ACHN (cell line): ENCODE measurements at regions of chr12 and their contacts with region 1.

Region 1: DNA sequence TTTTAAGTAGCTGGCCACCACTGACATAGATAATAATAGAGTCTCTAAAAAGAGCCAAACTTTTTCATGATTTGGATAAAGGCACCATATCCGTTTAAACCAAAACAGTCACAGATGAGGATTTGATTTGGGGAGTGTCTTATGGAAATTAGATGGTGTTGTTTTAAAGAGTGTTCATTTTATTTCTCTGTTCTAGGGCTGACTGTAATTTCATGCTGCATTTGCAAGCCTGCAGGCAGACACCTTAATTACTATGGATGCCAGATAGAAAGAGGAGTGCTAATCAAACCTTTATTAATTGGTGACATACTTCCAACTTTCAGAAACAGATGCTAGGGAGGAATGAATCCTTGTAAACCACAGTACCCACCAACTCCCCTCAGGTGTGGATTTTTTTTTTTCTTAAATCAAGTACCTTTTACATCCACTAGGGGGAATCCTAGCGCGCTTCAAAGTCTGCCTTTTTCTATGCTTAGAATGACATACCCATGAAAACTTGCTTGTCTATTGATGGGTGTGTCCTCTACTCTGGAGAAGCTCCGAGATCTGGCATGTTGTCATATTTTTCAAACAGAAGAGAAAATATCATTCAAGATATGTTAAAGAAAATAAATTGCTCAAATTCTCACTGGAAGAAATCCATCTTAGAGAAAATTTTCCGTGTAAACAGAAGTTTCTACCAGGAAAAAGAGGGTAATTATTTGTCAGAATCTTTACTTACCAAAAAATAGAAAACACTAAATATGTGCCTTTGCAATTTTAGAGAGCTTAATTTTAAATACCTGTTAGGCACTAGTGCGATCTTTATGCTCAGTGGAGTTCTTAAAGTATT is 14.2 kb upstream of the PLXNC1 start:
- DNase-seq: peak; percentile 76

Region 2: DNA sequence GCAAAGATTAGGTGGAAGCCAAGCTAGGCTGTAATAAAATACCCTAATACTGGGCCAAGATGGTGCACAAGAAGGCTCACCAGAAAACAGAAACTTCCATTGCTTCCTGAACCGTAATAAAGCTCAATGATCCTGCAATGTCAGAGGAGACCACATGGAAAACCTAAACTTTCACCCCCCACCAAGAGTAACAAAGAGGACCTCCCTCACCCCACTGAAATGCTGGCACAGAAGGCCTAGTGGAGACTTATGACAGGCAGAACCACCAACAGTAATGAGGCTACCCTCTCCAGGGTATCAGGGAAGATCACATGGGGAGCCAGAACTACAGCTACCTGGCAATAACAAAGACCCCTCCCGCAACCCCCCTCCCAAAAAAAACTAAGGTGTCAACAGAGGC is 282.4 kb after region 1 on chr12:
- in situ Hi-C with region 1: no loop called
- DNase-seq: no peak

Region 3: GRCh38 chr12:94498073-94498472 is 363.9 kb after region 1 on chr12:
- in situ Hi-C with region 1: no loop called
- DNase-seq: no peak

Region 4: DNA sequence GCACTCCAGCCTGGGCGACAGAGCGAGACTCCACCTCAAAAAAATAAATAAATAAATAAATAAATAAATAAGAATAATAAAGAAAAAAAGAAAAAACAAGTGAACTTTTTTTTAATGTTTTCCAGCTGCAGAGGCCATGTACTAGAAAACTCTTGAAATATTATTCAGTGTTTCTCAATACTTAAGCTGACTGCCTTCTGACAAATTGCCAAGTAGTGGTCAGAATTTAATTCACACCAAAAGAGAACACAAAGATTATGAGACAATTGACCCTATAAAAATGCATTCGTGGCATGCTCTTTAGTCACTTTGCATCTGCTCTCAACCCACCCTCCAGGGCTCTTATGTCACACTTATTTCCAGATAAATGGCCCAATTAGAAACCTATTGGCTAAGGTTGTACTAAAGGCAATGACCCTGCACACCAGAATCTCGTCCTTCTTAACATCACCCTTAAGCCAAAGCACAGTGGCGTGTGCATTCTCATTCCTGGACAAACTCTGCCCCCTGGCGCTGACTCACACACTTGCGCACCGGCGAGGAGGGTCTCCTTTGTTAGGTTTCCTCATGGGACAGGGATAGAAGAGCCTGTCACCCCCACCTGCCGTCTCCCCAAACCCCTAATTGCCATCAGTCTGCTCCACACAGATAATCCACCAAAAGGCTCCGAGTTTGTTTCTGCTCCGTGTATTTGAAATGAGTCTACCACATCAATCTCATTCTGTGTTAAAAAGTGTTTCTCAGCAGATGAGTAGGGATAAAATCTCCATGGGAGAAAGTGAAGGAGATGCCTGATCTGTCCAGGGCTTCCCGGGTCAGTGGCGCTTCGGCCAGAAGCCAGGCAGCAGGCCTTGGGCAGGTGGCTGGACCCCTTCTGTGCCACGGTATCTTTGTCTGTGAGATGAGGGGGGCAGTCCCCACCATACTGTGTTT is 398.6 kb after region 1 on chr12:
- in situ Hi-C with region 1: loop called (anchors 25 kb)
- DNase-seq: peak; percentile 80

Region 5: DNA sequence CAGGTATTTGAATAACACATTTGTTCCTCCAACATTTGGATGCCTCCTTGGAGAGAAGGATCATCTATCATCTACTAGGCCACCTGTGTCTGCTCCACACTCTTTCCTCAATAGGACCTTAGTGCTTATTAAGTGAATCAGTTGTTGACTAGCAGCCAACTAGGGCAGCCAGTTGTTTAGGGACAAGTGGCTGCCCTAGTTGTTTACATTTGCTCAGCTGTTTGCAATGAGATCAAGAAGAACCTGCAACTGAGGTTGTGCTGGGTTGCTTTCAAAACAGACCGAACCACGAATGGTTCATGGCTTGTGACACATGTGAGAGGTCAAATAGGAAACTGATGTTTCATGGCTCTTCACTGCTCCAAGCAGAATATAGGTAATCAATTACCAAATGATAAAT is 462.4 kb after region 1 on chr12:
- in situ Hi-C with region 1: no loop called
- DNase-seq: no peak